Activated CD4-positive, alpha-beta memory T cell treated with anti-CD3 and anti-CD28 coated beads for 36 hours (primary cell): ENCODE measurements at regions of chr10 and their contacts with region 1.

Region 1: GRCh38 chr10:61786728-61787127 is 114.8 kb upstream of the ARID5B start:
- DNase-seq: peak; percentile 49
- H3K4me3 Mint-ChIP-seq: no peak overlapping the region
- H3K27ac Mint-ChIP-seq: peak overlapping the region; percentile 19
- H3K4me1 Mint-ChIP-seq: peaks cover 49% of the 10 kb centered on the region
- H3K27me3 Mint-ChIP-seq: no peaks in the 10 kb centered on the region

Region 2: DNA sequence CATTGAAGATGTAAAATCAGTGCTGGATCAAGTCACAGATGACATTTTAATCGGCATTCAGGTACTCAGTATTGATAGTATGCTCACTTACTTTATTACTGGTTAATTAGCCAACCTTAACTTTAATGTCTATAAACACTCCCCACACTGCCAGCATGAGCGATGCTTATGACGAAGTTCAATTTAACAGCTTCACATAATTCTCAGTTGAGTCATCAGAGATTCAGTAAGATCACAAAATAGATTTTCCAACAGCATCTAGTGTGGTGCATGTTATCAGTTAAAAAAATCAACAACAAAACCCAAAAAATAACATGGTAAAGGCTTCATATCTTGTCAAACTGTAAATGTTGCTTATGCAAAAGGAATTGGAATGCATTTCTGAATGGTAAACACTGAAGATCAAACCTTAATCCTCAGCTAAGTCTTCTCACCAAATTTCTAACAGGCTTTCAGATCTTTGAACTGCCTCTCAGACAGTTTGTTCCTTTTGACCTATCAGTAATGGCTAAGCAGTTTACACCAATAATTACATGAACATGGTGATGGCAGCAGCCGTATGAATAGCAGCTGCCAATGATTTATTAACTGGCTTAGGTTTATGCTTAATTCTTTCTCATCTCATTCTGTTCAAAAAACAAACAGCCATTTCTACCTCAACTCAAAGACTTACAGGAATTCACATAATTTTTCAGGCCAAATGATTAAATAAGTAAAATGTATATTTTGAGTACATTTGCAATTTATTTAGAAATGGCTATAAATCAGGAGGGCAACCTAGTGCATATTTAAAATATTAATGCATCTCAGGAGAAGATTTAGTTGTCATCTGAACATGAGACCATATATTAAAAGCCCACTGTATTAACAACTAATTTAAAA is 25.5 kb before region 1 on chr10:
- CTCF ChIA-PET with region 1: no interaction called
- POLR2A ChIA-PET with region 1: no interaction called
- intact Hi-C with region 1: loop called (anchors 2 kb)
- DNase-seq: no peak
- H3K4me3 Mint-ChIP-seq: no peak overlapping the region
- H3K27ac Mint-ChIP-seq: no peak overlapping the region
- H3K4me1 Mint-ChIP-seq: peaks cover 16% of the 10 kb centered on the region
- H3K27me3 Mint-ChIP-seq: no peaks in the 10 kb centered on the region

Region 3: DNA sequence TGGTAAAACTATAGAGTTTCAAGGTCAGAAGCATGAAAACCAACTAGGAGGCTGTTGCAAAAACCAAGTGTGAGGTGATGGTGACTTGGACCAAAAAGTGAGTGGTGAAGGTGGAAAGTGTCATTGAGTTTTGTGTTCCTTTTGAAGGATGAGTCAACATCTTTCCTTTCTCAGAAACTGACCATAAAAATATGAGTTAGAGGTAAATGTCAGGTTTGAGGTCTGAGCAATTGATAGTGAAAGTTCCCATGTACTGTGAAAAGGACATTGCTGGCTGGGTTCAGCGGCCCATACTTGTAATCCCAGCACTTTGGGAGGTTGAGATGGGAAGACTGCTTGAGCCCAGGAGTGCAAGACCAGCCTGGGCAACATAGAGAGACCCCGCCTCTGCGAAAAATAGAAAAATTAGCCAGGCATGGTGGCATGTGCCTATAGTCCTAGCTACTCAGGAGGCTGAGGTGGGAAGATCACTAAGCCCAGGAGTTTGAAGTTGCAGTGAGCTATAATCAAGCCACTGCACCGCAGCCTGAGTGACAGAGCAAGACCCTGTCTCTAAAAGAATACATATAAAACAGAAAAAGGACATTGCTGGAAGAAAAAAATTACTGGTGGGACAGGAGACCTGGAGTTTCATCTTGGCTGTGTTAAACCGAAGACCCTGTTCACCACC is 25.5 kb after region 1 on chr10:
- CTCF ChIA-PET with region 1: no interaction called
- POLR2A ChIA-PET with region 1: no interaction called
- intact Hi-C with region 1: loop called (anchors 2 kb)
- DNase-seq: no peak
- H3K4me3 Mint-ChIP-seq: no peak overlapping the region
- H3K27ac Mint-ChIP-seq: no peak overlapping the region
- H3K4me1 Mint-ChIP-seq: peaks cover 2% of the 10 kb centered on the region
- H3K27me3 Mint-ChIP-seq: peaks cover 1% of the 10 kb centered on the region

Region 4: GRCh38 chr10:61822781-61823230 is 36.1 kb after region 1 on chr10:
- CTCF ChIA-PET with region 1: no interaction called
- POLR2A ChIA-PET with region 1: no interaction called
- intact Hi-C with region 1: no loop called
- DNase-seq: no peak
- H3K4me3 Mint-ChIP-seq: no peak overlapping the region
- H3K27ac Mint-ChIP-seq: no peak overlapping the region
- H3K4me1 Mint-ChIP-seq: no peaks in the 10 kb centered on the region
- H3K27me3 Mint-ChIP-seq: no peaks in the 10 kb centered on the region

Region 5: GRCh38 chr10:61832866-61833481 is 46.2 kb after region 1 on chr10:
- CTCF ChIA-PET with region 1: no interaction called
- POLR2A ChIA-PET with region 1: no interaction called
- intact Hi-C with region 1: no loop called
- DNase-seq: no peak
- H3K4me3 Mint-ChIP-seq: no peak overlapping the region
- H3K27ac Mint-ChIP-seq: no peak overlapping the region
- H3K4me1 Mint-ChIP-seq: peaks cover 23% of the 10 kb centered on the region
- H3K27me3 Mint-ChIP-seq: no peaks in the 10 kb centered on the region

Region 6: GRCh38 chr10:61869774-61870525 is 83.2 kb after region 1 on chr10:
- CTCF ChIA-PET with region 1: no interaction called
- POLR2A ChIA-PET with region 1: interaction called, 3 read pairs
- intact Hi-C with region 1: loop called (anchors 1 kb)
- DNase-seq: no peak
- H3K4me3 Mint-ChIP-seq: no peak overlapping the region
- H3K27ac Mint-ChIP-seq: no peak overlapping the region
- H3K4me1 Mint-ChIP-seq: peaks cover 13% of the 10 kb centered on the region
- H3K27me3 Mint-ChIP-seq: no peaks in the 10 kb centered on the region

Region 7: GRCh38 chr10:61882621-61883373 is 96.1 kb after region 1 on chr10:
- CTCF ChIA-PET with region 1: no interaction called
- POLR2A ChIA-PET with region 1: no interaction called
- intact Hi-C with region 1: loop called (anchors 2 kb)
- DNase-seq: peak; percentile 84
- H3K4me3 Mint-ChIP-seq: peak overlapping the region; percentile 47
- H3K27ac Mint-ChIP-seq: peak overlapping the region; percentile 77
- H3K4me1 Mint-ChIP-seq: peaks cover 30% of the 10 kb centered on the region
- H3K27me3 Mint-ChIP-seq: no peaks in the 10 kb centered on the region

Region 8: GRCh38 chr10:61992671-61993668 is 206.2 kb after region 1 on chr10:
- CTCF ChIA-PET with region 1: no interaction called
- POLR2A ChIA-PET with region 1: interaction called, 3 read pairs
- intact Hi-C with region 1: loop called (anchors 1 kb)
- DNase-seq: peak; percentile 75
- H3K4me3 Mint-ChIP-seq: peak overlapping the region; percentile 57
- H3K27ac Mint-ChIP-seq: peak overlapping the region; percentile 99
- H3K4me1 Mint-ChIP-seq: peaks cover 85% of the 10 kb centered on the region
- H3K27me3 Mint-ChIP-seq: no peaks in the 10 kb centered on the region